ENCODE measurements at regions of chr21 and their contacts with region 1.

Region 1: GRCh38 chr21:33199516-33200217 is 30.1 kb upstream of the IFNAR2 start:
- DNase-seq: no peak
- ATAC-seq: peak; percentile 88
- H3K4me3 Mint-ChIP-seq: no peak overlapping the region
- H3K27ac Mint-ChIP-seq: peak overlapping the region; percentile 12
- H3K4me1 Mint-ChIP-seq: peaks cover 27% of the 10 kb centered on the region
- H3K27me3 Mint-ChIP-seq: peaks cover 10% of the 10 kb centered on the region
- CTCF ChIP-seq: no peak

Region 2: GRCh38 chr21:32770871-32771523 is 428.7 kb before region 1 on chr21:
- CTCF ChIA-PET with region 1: no interaction called
- POLR2A ChIA-PET with region 1: no interaction called
- intact Hi-C with region 1: loop called (anchors 2 kb)
- DNase-seq: no peak
- ATAC-seq: peak; percentile 37
- H3K4me3 Mint-ChIP-seq: peak overlapping the region; percentile 96
- H3K27ac Mint-ChIP-seq: peak overlapping the region; percentile 88
- H3K4me1 Mint-ChIP-seq: peaks cover 45% of the 10 kb centered on the region
- H3K27me3 Mint-ChIP-seq: peaks cover 2% of the 10 kb centered on the region
- CTCF ChIP-seq: no peak

Region 3: DNA sequence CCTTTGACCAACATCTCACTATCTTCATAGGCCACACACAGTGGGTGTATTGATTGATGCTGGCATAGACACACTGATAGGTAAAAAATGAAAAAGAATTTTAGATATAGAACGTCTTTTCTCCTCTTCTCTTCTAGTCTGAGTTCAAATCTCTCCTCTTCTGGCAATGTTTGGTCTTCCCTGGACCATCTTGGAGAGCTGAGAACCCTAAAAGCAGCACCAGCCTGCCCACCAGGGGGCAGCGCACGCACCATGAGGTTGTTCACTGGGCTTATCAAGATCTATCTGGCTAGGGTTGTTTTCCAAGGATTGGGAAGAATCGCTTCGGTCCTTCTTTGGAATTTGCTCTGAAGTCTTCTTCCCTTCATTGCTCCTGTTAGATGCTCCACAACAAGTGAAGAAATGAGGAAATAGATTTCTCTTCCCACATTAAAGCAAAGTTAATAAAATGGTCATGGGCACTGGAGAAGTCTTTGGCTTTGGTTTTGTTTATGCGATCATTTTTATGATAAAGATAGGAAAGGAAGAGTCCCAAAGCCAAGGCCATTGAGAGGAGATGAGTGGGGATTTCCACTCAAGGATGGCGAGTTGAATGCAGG is 277.9 kb before region 1 on chr21:
- CTCF ChIA-PET with region 1: interaction called, 43 read pairs
- POLR2A ChIA-PET with region 1: no interaction called
- intact Hi-C with region 1: loop called (anchors 1 kb)
- DNase-seq: peak; percentile 26
- ATAC-seq: peak; percentile 40
- H3K4me3 Mint-ChIP-seq: no peak overlapping the region
- H3K27ac Mint-ChIP-seq: no peak overlapping the region
- H3K4me1 Mint-ChIP-seq: no peaks in the 10 kb centered on the region
- H3K27me3 Mint-ChIP-seq: peaks cover 20% of the 10 kb centered on the region
- CTCF ChIP-seq: peak; percentile 44

Region 4: DNA sequence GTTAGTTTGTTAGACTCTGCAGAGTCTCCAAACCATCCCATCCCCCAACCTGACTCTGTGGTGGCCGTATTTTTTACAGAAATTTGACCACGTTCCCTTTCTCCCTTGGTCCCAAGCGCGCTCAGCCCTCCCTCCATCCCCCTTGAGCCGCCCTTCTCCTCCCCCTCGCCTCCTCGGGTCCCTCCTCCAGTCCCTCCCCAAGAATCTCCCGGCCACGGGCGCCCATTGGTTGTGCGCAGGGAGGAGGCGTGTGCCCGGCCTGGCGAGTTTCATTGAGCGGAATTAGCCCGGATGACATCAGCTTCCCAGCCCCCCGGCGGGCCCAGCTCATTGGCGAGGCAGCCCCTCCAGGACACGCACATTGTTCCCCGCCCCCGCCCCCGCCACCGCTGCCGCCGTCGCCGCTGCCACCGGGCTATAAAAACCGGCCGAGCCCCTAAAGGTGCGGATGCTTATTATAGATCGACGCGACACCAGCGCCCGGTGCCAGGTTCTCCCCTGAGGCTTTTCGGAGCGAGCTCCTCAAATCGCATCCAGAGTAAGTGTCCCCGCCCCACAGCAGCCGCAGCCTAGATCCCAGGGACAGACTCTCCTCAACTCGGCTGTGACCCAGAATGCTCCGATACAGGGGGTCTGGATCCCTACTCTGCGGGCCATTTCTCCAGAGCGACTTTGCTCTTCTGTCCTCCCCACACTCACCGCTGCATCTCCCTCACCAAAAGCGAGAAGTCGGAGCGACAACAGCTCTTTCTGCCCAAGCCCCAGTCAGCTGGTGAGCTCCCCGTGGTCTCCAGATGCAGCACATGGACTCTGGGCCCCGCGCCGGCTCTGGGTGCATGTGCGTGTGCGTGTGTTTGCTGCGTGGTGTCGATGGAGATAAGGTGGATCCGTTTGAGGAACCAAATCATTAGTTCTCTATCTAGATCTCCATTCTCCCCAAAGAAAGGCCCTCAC is 173.9 kb before region 1 on chr21 and contains the start of gene OLIG2:
- CTCF ChIA-PET with region 1: no interaction called
- POLR2A ChIA-PET with region 1: no interaction called
- intact Hi-C with region 1: loop called (anchors 10 kb)
- DNase-seq: no peak
- ATAC-seq: no peak
- H3K4me3 Mint-ChIP-seq: peak within 1 kb of the TSS; percentile 5
- H3K27ac Mint-ChIP-seq: peak within 1 kb of the TSS; percentile 46
- H3K4me1 Mint-ChIP-seq: peaks cover 29% of the 10 kb centered on the region
- H3K27me3 Mint-ChIP-seq: peaks cover 64% of the 10 kb centered on the region
- CTCF ChIP-seq: no peak
- total RNA-seq, gene OLIG2: not detected in 2 replicates

Region 5: DNA sequence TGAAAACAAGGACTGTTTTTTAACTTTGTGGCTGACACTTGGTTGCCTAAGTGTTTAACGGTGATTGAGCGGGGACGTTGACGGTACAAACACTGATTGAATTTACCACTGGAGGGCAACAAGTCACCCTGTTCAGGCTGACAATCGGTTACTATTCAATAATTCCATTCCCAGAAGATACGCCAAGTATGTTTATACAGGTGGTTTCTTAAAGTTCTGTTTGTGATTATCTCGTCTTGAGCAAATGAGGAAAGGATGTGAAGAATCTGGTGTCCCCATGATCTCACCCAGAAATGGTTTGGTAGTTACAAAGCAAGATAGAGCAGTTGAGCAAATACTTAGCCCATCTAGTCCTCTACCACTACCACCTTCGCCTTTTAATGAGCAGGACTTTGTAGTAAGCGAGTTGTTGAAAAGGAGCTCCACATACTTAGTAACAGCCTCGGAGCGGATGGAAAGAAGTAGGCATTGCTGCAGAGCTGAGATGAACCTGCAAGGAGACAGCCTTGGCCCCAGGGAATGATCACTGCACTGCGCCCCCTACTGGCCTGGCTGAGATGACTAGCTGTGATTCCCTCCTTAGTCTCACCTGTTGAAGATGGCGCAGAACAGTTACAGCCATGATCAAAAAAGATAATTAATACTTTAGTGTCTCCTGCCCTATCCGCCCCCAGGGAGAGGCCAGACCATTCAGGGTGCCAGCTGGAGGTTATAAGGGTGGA is 161.4 kb after region 1 on chr21:
- CTCF ChIA-PET with region 1: interaction called, 21 read pairs
- POLR2A ChIA-PET with region 1: interaction called, 14 read pairs
- intact Hi-C with region 1: loop called (anchors 1 kb)
- DNase-seq: peak; percentile 73
- ATAC-seq: peak; percentile 80
- H3K4me3 Mint-ChIP-seq: peak overlapping the region; percentile 78
- H3K27ac Mint-ChIP-seq: peak overlapping the region; percentile 93
- H3K4me1 Mint-ChIP-seq: peaks cover 41% of the 10 kb centered on the region
- H3K27me3 Mint-ChIP-seq: no peaks in the 10 kb centered on the region
- CTCF ChIP-seq: peak; percentile 87

Region 6: DNA sequence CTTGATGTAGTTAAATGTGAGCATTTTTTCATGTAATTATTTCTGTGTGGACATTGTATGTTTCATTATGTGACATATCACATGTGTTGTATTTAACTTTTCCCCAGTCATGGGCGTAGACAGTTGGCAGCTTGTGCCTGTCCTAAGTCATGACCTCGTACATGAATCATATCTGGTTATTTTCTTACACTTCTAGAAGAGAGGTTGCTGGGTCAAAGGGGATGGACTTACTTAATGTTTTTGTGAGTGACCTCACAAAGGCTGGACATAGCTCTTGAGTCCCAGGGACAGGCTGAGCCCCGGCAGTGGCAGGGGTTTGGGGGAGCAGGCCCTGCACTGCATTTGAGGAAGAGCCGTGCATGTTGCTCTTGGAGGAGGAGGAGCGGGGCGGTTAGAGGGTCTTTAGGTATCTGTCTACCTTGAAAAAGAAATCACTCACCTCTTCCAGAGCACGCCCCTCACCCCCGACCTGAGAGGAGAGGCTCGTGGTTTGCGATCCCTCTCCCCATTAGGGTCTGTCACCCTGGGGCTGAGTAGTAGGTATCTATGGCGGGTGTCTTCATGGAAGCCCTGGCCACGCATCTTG is 220.0 kb after region 1 on chr21:
- CTCF ChIA-PET with region 1: no interaction called
- POLR2A ChIA-PET with region 1: no interaction called
- intact Hi-C with region 1: no loop called
- DNase-seq: no peak
- ATAC-seq: no peak
- H3K4me3 Mint-ChIP-seq: no peak overlapping the region
- H3K27ac Mint-ChIP-seq: peak overlapping the region; percentile 46
- H3K4me1 Mint-ChIP-seq: peaks cover 6% of the 10 kb centered on the region
- H3K27me3 Mint-ChIP-seq: no peaks in the 10 kb centered on the region
- CTCF ChIP-seq: no peak

Region 7: GRCh38 chr21:33451634-33452071 is 252.0 kb after region 1 on chr21:
- CTCF ChIA-PET with region 1: interaction called, 58 read pairs
- POLR2A ChIA-PET with region 1: no interaction called
- intact Hi-C with region 1: no loop called
- DNase-seq: no peak
- ATAC-seq: no peak
- H3K4me3 Mint-ChIP-seq: no peak overlapping the region
- H3K27ac Mint-ChIP-seq: no peak overlapping the region
- H3K4me1 Mint-ChIP-seq: no peaks in the 10 kb centered on the region
- H3K27me3 Mint-ChIP-seq: no peaks in the 10 kb centered on the region
- CTCF ChIP-seq: no peak

Measured in activated B cell treated with CpG ODN at 0.5 μM for 24 hours (primary cell).